ENCODE measurements at regions of chrX and their contacts with region 1.

Region 1: GRCh38 chrX:13487731-13488523 is 81.5 kb upstream of the EGFL6 start:
- DNase-seq: peak in 9 of 10 donors; percentile 1 to 67 (median 42)
- ATAC-seq: peak; percentile 75 to 88
- H3K4me3 Mint-ChIP-seq: peak overlapping the region in 4 of 10 donors; percentile 6 to 33 (median 28)
- H3K27ac Mint-ChIP-seq: peak overlapping the region; percentile 34 to 91 (median 78)
- H3K4me1 Mint-ChIP-seq: peaks cover 4 to 49% (median 33%) of the 10 kb centered on the region in 4 donors
- H3K27me3 Mint-ChIP-seq: no peaks in the 10 kb centered on the region

Region 2: DNA sequence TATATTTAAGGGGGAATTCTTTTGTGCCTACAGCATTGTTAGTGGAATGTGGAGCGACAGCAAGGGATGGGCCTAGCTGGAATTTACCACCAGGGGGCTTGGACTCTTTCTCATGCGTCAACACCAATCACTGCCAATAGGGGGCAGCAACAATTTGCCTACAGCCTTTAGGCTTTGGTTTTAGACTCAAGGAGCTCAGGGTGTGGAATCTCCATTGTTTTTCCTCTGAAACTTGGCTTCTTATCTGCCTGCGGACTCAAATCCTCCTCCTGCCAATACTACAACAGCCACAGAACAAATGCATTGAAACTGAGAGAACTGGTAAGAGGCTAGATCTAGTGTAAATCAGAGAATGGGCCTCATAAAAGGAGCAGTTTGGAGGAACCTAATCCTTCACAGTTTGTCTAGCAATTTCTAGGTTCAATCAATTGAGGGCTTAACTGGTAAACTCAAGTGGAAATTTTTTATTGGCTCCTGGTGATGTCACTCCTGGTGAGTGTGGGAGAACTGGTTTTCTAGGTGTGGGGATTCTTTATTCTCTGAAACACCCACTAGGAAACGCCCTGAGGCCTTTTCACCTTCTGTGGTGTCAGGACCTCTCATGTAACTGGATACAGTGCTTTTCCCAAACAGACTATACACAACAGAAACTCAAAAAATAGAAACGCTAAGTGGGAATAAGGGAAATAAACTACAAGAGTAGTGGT is 540.9 kb before region 1 on chrX:
- POLR2A ChIA-PET with region 1: interaction called, 18 read pairs
- DNase-seq: peak; percentile 38 to 95 (median 73)
- ATAC-seq: peak in 1 of 2 donors; percentile 11
- H3K4me3 Mint-ChIP-seq: peak overlapping the region; percentile 19 to 82 (median 68)
- H3K27ac Mint-ChIP-seq: peak overlapping the region; percentile 37 to 99 (median 96)
- H3K4me1 Mint-ChIP-seq: peaks cover 10 to 57% (median 50%) of the 10 kb centered on the region in 4 donors
- H3K27me3 Mint-ChIP-seq: no peaks in the 10 kb centered on the region

Region 3: DNA sequence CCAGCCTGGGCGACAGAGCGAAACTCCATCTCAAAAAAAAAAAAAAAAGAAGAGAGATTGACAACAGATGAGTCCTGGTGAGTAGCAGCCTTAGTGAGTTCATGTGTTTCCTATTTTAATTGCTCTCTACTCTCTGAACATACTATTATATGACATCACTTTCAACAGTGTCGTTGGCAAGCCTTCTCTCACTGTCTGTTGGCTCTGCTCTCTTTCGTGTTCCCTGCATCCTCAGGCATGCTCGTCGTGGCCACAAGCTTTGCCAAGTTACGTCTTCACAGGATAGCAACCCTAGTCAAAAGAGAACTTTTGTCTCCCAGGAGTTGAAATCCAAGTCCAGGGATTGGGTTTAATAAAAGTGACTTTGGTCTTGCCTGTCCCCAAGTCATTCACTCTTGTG is 35.6 kb before region 1 on chrX:
- POLR2A ChIA-PET with region 1: no interaction called
- DNase-seq: no peak
- ATAC-seq: no peak
- H3K4me3 Mint-ChIP-seq: no peak overlapping the region
- H3K27ac Mint-ChIP-seq: no peak overlapping the region
- H3K4me1 Mint-ChIP-seq: no peaks in the 10 kb centered on the region
- H3K27me3 Mint-ChIP-seq: no peaks in the 10 kb centered on the region

Region 4: GRCh38 chrX:13463608-13464007 is 24.3 kb before region 1 on chrX:
- POLR2A ChIA-PET with region 1: no interaction called
- DNase-seq: no peak
- ATAC-seq: no peak
- H3K4me3 Mint-ChIP-seq: no peak overlapping the region
- H3K27ac Mint-ChIP-seq: no peak overlapping the region
- H3K4me1 Mint-ChIP-seq: peaks cover 0 to 4% (median 1%) of the 10 kb centered on the region in 4 donors
- H3K27me3 Mint-ChIP-seq: no peaks in the 10 kb centered on the region